ENCODE measurements at regions of chr19 and their contacts with region 1.

Region 1: DNA sequence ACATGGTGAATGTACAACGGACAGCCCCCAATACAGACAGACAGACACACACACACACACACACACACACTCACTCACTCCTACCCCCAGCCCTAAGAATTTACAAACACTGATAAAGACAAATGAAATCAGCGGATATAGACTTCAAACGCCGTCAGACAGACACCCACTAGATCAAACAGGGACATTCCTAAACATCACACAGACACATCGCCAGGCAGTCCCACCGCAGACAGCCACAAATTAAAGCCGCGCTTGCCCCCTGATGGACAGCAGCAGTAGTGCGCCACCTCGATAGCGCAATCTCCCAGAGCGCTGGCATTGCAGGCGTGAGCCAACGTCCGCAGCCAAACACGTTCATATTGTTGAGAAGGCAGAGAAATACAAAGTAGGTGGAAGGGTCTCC is 24.7 kb upstream of the ADGRE1 start:
- DNase-seq: peak; percentile 98
- H3K4me3 Mint-ChIP-seq: peak overlapping the region; percentile 73
- H3K27ac Mint-ChIP-seq: peak overlapping the region; percentile 80
- H3K4me1 Mint-ChIP-seq: peaks cover 16% of the 10 kb centered on the region
- H3K27me3 Mint-ChIP-seq: no peaks in the 10 kb centered on the region

Region 2: DNA sequence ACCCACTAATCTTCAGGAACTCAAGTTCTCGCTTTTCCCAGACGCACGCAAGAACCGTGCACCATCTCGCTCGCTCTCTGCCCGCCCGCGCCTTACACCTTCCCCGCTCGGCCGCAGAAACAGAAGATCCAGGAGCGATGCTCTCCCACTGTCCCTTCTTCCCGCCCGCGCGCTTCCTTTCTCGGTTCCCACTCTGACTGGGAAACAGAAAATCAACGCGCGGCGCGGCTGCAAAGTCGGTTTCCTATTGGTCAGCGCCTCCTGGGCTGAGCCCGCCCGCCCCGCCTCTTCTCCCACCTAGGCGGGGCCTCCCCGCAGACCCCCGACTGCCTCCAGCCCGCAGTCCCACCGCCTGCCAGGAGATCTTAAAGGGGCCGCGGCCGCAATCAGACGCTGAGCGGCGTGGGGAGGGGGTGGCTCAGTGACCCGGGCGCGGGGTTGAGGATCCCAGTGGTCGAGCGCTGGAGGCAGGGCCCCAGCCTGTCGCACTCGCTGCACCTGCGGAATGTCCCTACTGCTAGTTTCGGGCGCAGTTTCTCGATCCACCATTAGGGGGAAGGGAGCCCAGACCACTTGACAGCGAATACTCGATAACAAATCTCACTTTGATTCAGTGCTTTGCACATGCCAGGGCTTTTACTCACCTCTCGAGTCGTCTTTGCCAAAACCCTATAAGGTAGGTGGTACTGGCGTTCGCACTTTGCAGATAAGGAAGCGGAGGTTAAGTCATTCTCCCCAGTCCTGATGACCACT is 402.4 kb before region 1 on chr19:
- CTCF ChIA-PET with region 1: no interaction called
- intact Hi-C with region 1: loop called (anchors 1 kb)
- DNase-seq: peak; percentile 98
- H3K4me3 Mint-ChIP-seq: peak overlapping the region; percentile 90
- H3K27ac Mint-ChIP-seq: peak overlapping the region; percentile 78
- H3K4me1 Mint-ChIP-seq: peaks cover 22% of the 10 kb centered on the region
- H3K27me3 Mint-ChIP-seq: no peaks in the 10 kb centered on the region

Region 3: DNA sequence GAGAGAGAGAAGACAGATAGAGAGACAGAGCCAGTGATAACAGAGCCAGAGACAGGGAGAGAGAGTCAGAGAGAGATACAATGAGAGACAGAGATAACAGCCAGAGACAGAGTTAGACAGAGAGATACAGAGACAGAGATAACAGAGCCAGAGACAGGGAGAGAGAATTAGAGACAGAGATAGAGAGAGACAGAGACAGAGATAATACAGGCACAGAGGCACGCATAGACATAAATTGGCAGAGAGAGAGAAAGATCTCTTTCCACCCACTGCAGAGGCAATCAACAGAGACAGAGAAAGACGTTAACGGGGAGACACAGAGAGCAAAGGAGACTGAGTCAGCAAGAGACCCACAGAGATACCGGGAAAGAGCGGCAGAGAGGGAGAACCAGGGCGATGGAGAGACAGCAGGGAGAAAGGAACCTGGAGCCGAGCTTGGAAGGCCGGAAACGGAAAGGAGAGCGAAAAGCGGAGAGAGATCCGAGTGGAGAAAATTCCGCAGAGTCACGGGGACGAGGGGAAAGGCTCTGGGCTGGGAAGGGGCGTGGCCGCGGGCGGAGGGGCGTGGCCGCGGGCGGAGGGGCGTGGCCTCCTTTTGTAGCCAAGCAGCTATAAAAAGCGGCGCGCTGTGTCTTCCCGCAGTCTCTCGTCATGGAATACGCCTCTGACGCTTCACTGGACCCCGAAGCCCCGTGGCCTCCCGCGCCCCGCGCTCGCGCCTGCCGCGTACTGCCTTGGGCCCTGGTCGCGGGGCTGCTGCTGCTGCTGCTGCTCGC is 332.1 kb before region 1 on chr19 and contains the start of gene TNFSF9:
- CTCF ChIA-PET with region 1: no interaction called
- intact Hi-C with region 1: loop called (anchors 5 kb)
- DNase-seq: peak; percentile 88
- H3K4me3 Mint-ChIP-seq: peak within 1 kb of the TSS; percentile 82
- H3K27ac Mint-ChIP-seq: peak within 1 kb of the TSS; percentile 7
- H3K4me1 Mint-ChIP-seq: peaks cover 26% of the 10 kb centered on the region
- H3K27me3 Mint-ChIP-seq: peaks cover 32% of the 10 kb centered on the region
- total RNA-seq, gene TNFSF9: 1.3 to 1.5 TPM

Region 4: DNA sequence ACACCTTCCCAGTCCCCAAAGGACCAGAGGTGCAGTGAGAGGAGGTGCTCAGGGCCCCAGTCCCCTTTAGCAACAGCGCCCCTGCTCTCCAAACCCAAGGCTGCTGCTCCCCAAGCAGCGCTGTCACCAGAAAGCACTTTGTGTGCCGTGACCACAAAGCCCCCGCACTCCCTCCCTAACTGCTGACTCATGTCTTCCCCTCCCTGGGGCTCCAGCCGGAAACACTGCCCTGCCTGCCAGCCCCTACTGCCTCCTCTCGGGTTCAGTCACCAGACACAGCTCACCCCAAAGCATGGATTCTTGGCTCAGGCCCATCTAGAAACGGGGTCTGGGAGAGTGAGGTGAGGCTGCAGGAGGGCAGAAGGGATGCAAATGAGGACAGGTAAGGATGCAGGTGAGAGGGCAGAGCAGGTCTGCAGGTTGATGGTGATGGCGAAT is 187.8 kb before region 1 on chr19:
- CTCF ChIA-PET with region 1: no interaction called
- intact Hi-C with region 1: loop called (anchors 1 kb)
- DNase-seq: peak; percentile 97
- H3K4me3 Mint-ChIP-seq: peak overlapping the region; percentile 34
- H3K27ac Mint-ChIP-seq: peak overlapping the region; percentile 77
- H3K4me1 Mint-ChIP-seq: peaks cover 78% of the 10 kb centered on the region
- H3K27me3 Mint-ChIP-seq: no peaks in the 10 kb centered on the region

Region 5: GRCh38 chr19:6767357-6768235 is 95.1 kb before region 1 on chr19 and contains the start of gene SH2D3A:
- CTCF ChIA-PET with region 1: interaction called, 20 read pairs
- intact Hi-C with region 1: loop called (anchors 1 kb)
- DNase-seq: peak; percentile 98
- H3K4me3 Mint-ChIP-seq: peak within 1 kb of the TSS; percentile 94
- H3K27ac Mint-ChIP-seq: peak within 1 kb of the TSS; percentile 91
- H3K4me1 Mint-ChIP-seq: peaks cover 39% of the 10 kb centered on the region
- H3K27me3 Mint-ChIP-seq: no peaks in the 10 kb centered on the region
- total RNA-seq, gene SH2D3A: 23.2 to 24.9 TPM

Region 6: GRCh38 chr19:6891761-6892385 is 29.2 kb after region 1 on chr19:
- CTCF ChIA-PET with region 1: interaction called, 7 read pairs
- intact Hi-C with region 1: loop called (anchors 2 kb)
- DNase-seq: peak; percentile 22
- H3K4me3 Mint-ChIP-seq: peak overlapping the region; percentile 63
- H3K27ac Mint-ChIP-seq: peak overlapping the region; percentile 93
- H3K4me1 Mint-ChIP-seq: peaks cover 68% of the 10 kb centered on the region
- H3K27me3 Mint-ChIP-seq: no peaks in the 10 kb centered on the region